Naive thymus-derived CD4-positive, alpha-beta T cell (primary cell): ENCODE measurements at regions of chr7 and their contacts with region 1.

Region 1: GRCh38 chr7:100691676-100692577 is 2.1 kb downstream of the GIGYF1 start:
- DNase-seq: peak; percentile 64 to 85 (median 78)
- ATAC-seq: peak; percentile 79
- H3K4me3 ChIP-seq: peak overlapping the region; percentile 67
- H3K4me3 Mint-ChIP-seq: peak overlapping the region; percentile 92 to 100 (median 94)
- H3K27ac ChIP-seq: peak overlapping the region; percentile 73
- H3K27ac Mint-ChIP-seq: peak overlapping the region; percentile 62 to 96 (median 95)
- H3K4me1 ChIP-seq: peaks cover 23 to 27% of the 10 kb centered on the region in 2 donors
- H3K4me1 Mint-ChIP-seq: peaks cover 29 to 54% (median 41%) of the 10 kb centered on the region in 7 donors
- H3K27me3 ChIP-seq: no peaks in the 10 kb centered on the region
- H3K27me3 Mint-ChIP-seq: peaks cover 0 to 16% (median 0%) of the 10 kb centered on the region in 5 donors

Region 2: DNA sequence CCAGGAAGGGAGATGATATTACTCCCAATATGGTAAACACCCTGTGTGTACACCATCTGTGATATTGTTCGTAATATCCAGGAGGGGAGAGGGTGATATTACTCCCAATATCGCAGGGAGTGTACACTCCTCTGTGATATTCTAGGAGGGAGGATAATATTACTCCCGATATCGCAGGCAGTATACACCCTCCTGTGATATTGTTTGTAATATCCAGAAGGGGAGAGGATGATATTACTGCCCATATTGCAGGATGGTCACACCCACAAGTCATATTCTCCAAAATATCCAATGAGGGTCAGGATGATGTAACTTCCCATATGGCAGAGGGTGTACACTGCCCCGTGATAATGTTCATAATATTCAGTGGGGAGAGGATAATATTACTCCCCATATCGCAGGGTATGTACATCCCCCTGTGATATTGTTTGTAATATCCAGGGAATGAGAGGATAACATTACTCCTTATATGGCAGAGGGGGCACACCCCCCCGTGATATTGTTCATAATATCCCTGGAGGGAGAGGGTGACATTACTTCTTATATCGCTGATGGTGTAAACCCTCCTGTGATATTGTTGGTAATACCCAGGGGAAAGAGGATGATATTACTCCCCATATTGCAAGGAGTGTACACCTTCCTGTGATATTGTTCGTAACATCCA is 733.2 kb before region 1 on chr7:
- CTCF ChIA-PET with region 1: no interaction called
- POLR2A ChIA-PET with region 1: no interaction called
- intact Hi-C with region 1: no loop called
- DNase-seq: no peak
- ATAC-seq: no peak
- H3K4me3 ChIP-seq: no peak overlapping the region
- H3K4me3 Mint-ChIP-seq: no peak overlapping the region
- H3K27ac ChIP-seq: no peak overlapping the region
- H3K27ac Mint-ChIP-seq: no peak overlapping the region
- H3K4me1 ChIP-seq: no peaks in the 10 kb centered on the region
- H3K4me1 Mint-ChIP-seq: peaks cover 0 to 2% (median 0%) of the 10 kb centered on the region in 7 donors
- H3K27me3 ChIP-seq: no peaks in the 10 kb centered on the region
- H3K27me3 Mint-ChIP-seq: peaks cover 9 to 56% (median 43%) of the 10 kb centered on the region in 5 donors

Region 3: DNA sequence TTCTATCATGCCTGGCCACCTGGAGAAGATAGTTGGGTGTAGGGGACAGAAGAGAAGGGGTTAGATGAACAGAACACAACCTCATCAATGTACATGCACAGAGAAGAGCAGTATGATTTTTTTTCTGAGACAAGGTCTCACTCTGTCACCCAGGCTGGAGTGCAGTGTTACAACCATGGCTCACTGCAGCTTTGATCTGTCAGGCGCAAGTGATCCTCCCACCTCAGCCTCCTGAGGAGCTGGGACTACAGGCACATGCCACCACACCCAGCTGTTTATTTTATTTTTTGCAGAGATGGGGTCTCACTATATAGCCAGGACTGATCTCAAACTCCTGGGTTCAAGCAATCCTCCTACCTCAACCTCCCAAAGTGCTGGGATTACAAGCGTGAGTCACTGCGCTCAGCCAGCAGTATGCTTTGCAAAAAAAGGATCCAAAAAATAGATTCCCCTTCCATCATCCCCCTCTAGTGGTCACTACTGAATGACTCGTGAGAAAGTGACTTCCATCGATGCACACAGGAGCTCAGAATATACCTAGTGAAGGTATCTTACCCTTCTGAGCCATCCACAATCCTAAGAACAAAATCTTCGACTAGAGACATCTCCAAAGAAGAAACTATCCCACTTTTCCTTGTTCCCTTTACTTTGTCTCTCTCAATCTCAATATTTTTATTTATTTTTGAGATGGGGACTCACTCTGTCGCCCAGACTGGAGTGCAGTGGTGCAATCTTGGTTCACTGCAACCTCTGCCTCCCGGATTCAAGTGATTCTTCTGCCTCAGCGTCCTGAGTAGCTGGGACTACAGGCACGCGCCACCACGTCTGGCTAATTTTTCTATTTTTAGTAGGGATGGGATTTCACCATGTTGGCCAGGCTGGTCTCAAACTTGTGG is 284.4 kb before region 1 on chr7:
- CTCF ChIA-PET with region 1: no interaction called
- POLR2A ChIA-PET with region 1: no interaction called
- intact Hi-C with region 1: no loop called
- DNase-seq: peak in 7 of 9 donors; percentile 35 to 69 (median 53)
- ATAC-seq: peak; percentile 97
- H3K4me3 ChIP-seq: no peak overlapping the region
- H3K4me3 Mint-ChIP-seq: no peak overlapping the region
- H3K27ac ChIP-seq: no peak overlapping the region
- H3K27ac Mint-ChIP-seq: peak overlapping the region in 1 of 9 donors; percentile 65
- H3K4me1 ChIP-seq: no peaks in the 10 kb centered on the region
- H3K4me1 Mint-ChIP-seq: peaks cover 0 to 5% (median 2%) of the 10 kb centered on the region in 7 donors
- H3K27me3 ChIP-seq: no peaks in the 10 kb centered on the region
- H3K27me3 Mint-ChIP-seq: peaks cover 0 to 32% (median 0%) of the 10 kb centered on the region in 5 donors

Region 4: DNA sequence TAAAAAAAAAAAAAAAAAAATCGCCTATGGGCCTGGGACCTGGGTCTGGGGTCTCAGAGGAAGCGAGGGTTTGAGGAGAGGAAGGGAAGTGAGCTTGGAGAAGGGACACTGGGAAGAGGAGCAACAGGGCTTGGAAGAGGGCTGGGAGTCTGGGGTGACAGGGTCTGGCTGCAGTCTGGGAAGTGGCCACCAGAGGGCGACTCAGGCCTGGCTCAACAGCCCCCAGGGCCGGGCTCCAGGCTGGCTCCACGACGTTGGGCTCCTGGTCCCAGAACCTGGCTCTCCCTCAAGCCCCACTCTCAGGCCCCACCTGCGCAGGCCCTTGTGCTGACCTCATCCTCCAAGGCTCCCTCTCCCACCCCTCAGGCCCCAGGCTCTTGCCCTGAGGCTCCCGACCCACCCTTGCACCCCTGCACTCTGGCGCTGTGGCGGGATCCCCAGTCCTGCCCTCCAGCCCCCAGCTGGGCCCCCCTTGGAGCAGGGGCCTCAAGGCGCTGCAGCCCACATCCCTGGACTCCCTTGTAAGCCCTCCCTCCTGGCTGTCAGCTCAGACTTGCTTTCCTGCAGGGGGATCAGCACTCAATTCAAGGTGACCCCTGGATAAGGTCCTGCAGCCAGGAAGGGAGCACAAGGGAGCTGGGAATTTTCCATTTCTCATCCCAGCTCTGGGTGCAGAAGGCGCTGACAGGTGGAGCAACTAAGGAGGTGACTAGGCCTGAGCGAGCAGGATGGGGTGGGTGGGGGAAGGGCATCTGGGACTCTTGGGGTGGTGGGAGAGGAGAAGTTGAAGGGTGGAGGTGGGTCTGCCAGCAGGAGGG is 222.5 kb before region 1 on chr7:
- CTCF ChIA-PET with region 1: interaction called, 3 read pairs
- POLR2A ChIA-PET with region 1: interaction called, 3 read pairs
- intact Hi-C with region 1: loop called in 1 of 2 experiments (anchors 2 kb)
- DNase-seq: peak; percentile 55 to 87 (median 75)
- ATAC-seq: peak; percentile 94
- H3K4me3 ChIP-seq: no peak overlapping the region
- H3K4me3 Mint-ChIP-seq: peak overlapping the region in 1 of 10 donors; percentile 41
- H3K27ac ChIP-seq: peak overlapping the region; percentile 3
- H3K27ac Mint-ChIP-seq: peak overlapping the region in 6 of 9 donors; percentile 22 to 85 (median 65)
- H3K4me1 ChIP-seq: peaks cover 16 to 23% of the 10 kb centered on the region in 2 donors
- H3K4me1 Mint-ChIP-seq: peaks cover 26 to 45% (median 29%) of the 10 kb centered on the region in 7 donors
- H3K27me3 ChIP-seq: no peaks in the 10 kb centered on the region
- H3K27me3 Mint-ChIP-seq: no peaks in the 10 kb centered on the region

Region 5: DNA sequence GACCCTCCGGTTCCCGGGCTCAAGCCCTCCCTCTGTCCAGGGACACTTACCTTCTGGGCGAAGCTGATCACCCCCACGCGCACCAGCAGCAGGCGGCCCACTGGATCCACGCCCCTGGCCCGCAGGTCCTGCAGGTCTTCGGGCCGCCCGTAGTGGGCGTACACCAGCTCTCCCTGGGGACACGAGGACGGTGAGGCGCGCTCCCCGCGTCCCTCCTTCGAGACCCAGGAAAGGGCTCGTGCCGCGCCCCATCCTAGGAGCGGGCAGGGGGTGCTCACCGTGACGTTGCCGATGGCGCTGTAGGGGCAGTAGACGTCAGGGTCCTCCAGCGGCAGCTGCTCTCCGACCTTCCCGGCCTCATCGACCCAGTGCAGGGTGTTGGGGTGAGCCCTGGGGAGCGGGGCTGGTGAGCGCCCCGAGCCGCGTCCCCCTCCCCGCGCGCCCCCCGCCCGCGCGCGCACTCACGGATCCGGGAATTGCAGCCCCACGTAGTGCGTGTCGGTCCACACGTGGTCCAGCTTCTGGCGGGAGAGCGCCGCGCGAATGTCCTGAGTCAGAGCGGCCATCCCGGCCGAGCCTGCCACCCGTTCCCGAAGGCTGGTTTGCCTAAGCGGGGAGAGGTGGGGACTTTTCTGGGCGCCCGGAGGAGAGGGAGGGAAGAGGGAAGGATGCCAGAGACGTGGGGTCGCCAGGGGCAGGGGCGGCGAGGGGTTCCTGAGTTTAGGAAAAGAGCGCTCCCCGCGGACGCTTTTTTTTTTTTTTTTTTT is 58.8 kb before region 1 on chr7:
- CTCF ChIA-PET with region 1: interaction called, 20 read pairs
- POLR2A ChIA-PET with region 1: interaction called, 5 read pairs
- intact Hi-C with region 1: loop called (anchors 1 to 2 kb)
- DNase-seq: peak in 8 of 9 donors; percentile 39 to 72 (median 45)
- ATAC-seq: peak; percentile 79
- H3K4me3 ChIP-seq: peak overlapping the region; percentile 68
- H3K4me3 Mint-ChIP-seq: peak overlapping the region; percentile 79 to 89 (median 84)
- H3K27ac ChIP-seq: peak overlapping the region; percentile 56
- H3K27ac Mint-ChIP-seq: peak overlapping the region in 7 of 9 donors; percentile 40 to 92 (median 63)
- H3K4me1 ChIP-seq: no peaks in the 10 kb centered on the region
- H3K4me1 Mint-ChIP-seq: peaks cover 10 to 42% (median 25%) of the 10 kb centered on the region in 7 donors
- H3K27me3 ChIP-seq: no peaks in the 10 kb centered on the region
- H3K27me3 Mint-ChIP-seq: peaks cover 0 to 4% (median 0%) of the 10 kb centered on the region in 5 donors

Region 6: DNA sequence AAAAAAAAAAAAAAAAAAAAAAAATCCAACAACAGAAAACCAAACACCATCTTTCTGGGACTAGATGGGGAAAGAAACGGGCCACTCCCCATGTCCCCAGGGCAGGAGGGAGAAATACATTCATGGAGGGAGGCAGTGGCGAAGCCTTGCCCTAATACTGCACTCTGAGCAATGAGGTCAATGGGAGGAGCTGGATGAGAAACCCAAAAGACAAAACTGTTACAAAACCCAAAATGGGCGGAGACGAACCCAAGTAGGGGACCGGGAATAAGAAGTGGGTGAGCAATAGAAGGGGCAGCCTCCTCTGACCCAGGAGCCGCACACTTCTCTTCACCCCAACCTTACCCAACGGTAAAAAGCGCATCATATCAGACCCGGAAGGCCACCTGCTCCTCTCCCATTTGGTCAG is 11.8 kb before region 1 on chr7:
- CTCF ChIA-PET with region 1: interaction called, 33 read pairs
- POLR2A ChIA-PET with region 1: interaction called, 37 read pairs
- intact Hi-C with region 1: loop called in 1 of 2 experiments (anchors 1 kb)
- DNase-seq: no peak
- ATAC-seq: no peak
- H3K4me3 ChIP-seq: no peak overlapping the region
- H3K4me3 Mint-ChIP-seq: peak overlapping the region in 8 of 10 donors; percentile 12 to 75 (median 38)
- H3K27ac ChIP-seq: peak overlapping the region; percentile 53
- H3K27ac Mint-ChIP-seq: peak overlapping the region in 8 of 9 donors; percentile 33 to 90 (median 81)
- H3K4me1 ChIP-seq: peaks cover 0 to 22% of the 10 kb centered on the region in 2 donors
- H3K4me1 Mint-ChIP-seq: peaks cover 21 to 50% (median 30%) of the 10 kb centered on the region in 7 donors
- H3K27me3 ChIP-seq: no peaks in the 10 kb centered on the region
- H3K27me3 Mint-ChIP-seq: no peaks in the 10 kb centered on the region